Aorta (tissue), 5 donors: ENCODE measurements at regions of chr5 and their contacts with region 1.

Region 1: DNA sequence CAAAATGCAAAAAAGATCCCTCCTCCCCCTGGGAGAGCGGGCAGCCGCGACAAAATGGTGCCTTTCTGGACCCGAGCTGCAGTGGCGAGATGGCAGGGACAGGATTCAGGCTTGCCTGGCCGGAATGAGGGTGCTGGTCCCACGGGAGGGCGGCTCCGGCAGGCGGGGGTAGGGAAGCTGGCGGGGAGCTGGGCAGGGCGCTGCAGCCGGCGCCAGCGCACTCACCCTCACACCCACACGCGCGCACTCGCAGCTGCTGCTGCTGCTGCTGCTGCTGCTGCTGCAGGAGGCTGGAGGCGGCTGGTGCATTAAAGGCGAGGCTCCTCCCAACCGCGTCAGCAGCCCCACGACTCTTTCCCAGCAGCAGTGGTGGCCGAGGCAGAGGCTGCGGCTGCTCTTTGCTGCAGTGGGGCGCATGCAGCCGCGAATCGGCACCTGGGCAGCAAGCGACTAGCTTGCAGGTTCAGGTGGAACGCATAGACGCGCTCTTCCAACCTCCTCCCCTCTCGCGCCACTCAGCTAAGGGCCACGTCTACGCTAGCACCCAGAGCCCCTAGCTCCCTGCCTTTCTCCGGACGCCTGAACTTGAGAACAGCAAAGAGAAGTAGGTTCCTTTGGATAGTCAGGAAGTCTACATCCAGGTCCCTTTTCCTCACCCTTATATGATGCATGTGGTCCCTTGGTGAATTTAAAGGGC is at the start of gene PPP2R2B:
- DNase-seq: peak; percentile 78 to 89
- ATAC-seq: peak; percentile 84
- H3K4me3 ChIP-seq: peak within 1 kb of the TSS; percentile 79 to 89
- H3K27ac ChIP-seq: peak within 1 kb of the TSS in 1 of 2 donors; percentile 78
- H3K4me1 ChIP-seq: peaks cover 0 to 6% of the 10 kb centered on the region in 2 donors
- H3K27me3 ChIP-seq: no peaks in the 10 kb centered on the region
- total RNA-seq, gene PPP2R2B: 15.0 to 27.3 TPM

Region 2: GRCh38 chr5:146541958-146542849 is 336.4 kb before region 1 on chr5:
- intact Hi-C with region 1: loop called in 1 of 2 experiments (anchors 10 kb)
- DNase-seq: peak; percentile 73 to 92
- ATAC-seq: peak; percentile 86
- H3K4me3 ChIP-seq: no peak overlapping the region
- H3K27ac ChIP-seq: no peak overlapping the region
- H3K4me1 ChIP-seq: no peaks in the 10 kb centered on the region
- H3K27me3 ChIP-seq: no peaks in the 10 kb centered on the region

Region 3: DNA sequence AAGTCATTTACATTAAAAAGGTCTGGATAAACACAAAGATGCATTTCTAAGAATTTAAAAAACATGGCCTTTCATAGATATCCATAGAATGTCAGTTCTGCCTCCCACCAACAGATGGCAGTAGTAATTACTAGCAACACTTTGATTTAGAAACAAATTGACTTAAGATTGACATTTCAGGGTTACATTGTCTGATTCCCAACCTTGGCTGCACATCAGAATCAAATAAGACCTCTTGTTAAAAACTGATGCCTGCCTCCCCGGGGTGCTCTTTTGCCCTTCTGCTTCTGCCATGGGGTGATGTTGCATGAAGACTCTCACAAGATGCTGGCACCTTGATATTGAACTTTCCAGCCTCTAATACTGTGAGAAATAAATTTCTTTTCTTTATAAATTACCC is 216.4 kb before region 1 on chr5:
- intact Hi-C with region 1: loop called in 1 of 2 experiments (anchors 10 kb)
- DNase-seq: no peak
- ATAC-seq: no peak
- H3K4me3 ChIP-seq: no peak overlapping the region
- H3K27ac ChIP-seq: no peak overlapping the region
- H3K4me1 ChIP-seq: peaks cover 2 to 4% of the 10 kb centered on the region in 2 donors
- H3K27me3 ChIP-seq: no peaks in the 10 kb centered on the region

Region 4: DNA sequence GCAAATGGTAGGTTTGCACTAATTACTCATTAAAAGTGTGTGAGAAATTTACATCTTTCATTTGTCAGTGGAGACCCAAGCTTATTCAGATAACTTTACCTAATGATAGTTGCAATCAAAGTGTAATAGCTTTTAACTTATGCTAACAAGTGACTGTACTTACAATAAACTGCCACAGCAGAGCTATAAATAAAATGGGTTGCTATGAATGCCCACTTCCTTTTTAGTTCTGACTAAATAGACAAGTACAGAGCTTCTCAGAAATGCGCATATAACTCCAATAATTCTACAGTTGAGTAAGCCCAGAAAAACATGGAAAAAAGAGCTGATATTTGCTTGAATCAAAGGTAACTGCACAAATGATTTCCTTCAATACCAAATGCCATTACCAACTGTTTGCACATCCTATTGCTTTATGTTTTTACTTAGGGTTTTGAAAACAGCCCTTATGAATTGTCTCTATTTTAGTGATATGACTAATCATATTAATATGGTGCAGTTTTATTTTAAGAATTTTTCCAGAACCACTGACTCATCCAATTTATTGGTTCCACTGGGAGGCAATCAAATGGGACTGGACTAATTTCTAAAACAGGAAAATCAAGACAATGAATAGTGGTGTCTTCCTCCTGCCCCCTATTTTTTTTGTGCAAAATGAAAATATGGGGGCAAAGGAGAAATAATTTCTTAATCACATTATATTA is 84.1 kb before region 1 on chr5:
- intact Hi-C with region 1: loop called in 1 of 2 experiments (anchors 5 kb)
- DNase-seq: no peak
- ATAC-seq: peak; percentile 58
- H3K4me3 ChIP-seq: no peak overlapping the region
- H3K27ac ChIP-seq: no peak overlapping the region
- H3K4me1 ChIP-seq: peaks cover 11 to 20% of the 10 kb centered on the region in 2 donors
- H3K27me3 ChIP-seq: no peaks in the 10 kb centered on the region

Region 5: DNA sequence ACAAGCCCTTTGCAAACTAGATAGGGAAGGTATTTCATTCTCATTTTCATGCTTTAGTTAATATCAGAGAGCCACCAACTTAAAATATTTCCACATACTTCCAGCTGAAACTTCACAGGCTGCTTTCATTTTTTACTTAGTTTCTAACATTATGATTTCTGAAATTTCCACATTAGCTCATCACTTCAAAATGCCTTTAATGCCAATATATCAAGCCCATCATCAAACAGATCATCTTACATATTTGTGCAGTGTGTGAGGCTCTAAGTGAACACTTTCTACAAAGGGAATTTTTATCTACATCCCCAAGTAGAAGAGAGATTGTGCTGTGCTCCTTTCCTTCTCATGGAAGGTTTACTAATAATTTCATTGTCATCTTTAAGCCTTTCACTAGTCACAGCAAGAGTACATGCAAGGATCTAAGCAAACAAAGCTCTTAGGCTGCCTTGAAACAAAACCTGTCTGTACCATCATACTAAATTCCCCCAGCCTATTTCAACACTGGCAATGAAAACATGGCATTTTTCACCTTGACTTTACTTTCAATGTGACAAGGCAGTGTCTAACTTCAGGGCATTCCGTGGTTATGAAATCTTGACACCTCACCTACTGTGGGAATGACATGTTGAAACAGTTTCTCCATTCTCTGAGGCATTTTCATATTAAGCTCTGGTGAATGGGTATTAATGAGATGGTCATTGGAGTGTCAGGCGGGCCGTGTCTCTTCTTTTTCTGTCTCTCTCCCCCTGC is 45.5 kb before region 1 on chr5:
- intact Hi-C with region 1: loop called in 1 of 2 experiments (anchors 5 kb)
- DNase-seq: no peak
- ATAC-seq: no peak
- H3K4me3 ChIP-seq: no peak overlapping the region
- H3K27ac ChIP-seq: no peak overlapping the region
- H3K4me1 ChIP-seq: peaks cover 3 to 4% of the 10 kb centered on the region in 2 donors
- H3K27me3 ChIP-seq: no peaks in the 10 kb centered on the region

Region 6: DNA sequence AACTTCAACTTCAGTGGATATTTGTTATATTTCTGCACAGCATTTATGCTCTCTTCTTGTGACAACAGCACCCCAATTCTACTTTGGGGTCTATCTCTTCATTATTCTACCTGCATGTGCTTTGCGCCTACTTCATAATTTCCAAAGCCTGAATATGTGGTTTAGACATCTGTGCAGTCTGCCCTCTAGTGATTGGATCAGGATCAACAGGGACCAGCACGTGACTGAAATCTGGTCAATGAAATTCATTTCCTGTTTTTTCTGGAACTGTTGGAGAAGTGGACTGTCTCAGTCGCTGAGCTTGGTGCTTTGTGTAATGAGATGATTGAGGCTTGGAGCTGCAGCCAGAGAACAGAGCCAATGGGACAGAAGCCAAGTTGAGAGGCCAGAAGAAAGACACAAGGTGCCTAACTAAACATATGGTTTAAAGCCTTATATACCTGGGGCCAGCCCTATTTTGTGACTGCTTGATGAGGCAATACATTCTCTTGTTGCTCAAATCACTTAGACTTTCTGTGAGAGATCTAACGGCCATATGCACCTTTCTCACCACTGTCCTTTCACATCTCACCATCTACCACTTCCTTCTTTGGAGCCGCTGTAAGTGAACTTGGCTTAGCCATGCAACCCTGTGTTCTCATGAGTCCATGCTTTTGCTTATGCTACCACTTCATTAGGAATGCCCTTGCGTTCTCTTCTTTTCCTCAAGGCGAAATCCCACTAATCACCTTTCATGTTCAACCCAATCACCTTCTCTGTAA is 68.7 kb after region 1 on chr5:
- intact Hi-C with region 1: loop called in 1 of 2 experiments (anchors 10 kb)
- DNase-seq: no peak
- ATAC-seq: no peak
- H3K4me3 ChIP-seq: no peak overlapping the region
- H3K27ac ChIP-seq: no peak overlapping the region
- H3K4me1 ChIP-seq: peaks cover 0 to 3% of the 10 kb centered on the region in 2 donors
- H3K27me3 ChIP-seq: no peaks in the 10 kb centered on the region

Region 7: DNA sequence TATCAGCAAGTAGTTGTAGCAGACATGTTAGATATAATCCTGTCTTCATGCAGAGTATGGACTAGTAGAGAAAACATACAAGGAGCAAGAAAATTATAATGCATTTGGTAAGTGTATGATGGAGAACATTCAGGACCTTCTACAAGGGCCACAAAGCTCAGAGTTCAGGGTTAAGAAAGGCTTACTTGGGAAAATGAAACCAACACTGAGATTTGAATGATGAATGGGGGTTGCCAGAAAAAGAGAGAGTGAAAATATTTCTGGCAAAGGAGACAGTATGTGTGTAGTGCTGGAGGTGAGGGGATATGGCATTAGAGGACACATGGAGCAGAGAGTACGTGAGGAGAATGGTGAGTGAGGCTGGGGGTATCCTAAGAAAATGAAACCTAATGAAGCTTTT is 186.4 kb after region 1 on chr5:
- intact Hi-C with region 1: no loop called
- DNase-seq: no peak
- ATAC-seq: no peak
- H3K4me3 ChIP-seq: no peak overlapping the region
- H3K27ac ChIP-seq: no peak overlapping the region
- H3K4me1 ChIP-seq: no peaks in the 10 kb centered on the region
- H3K27me3 ChIP-seq: no peaks in the 10 kb centered on the region

Region 8: GRCh38 chr5:147369742-147370374 is 491.2 kb after region 1 on chr5:
- intact Hi-C with region 1: no loop called
- DNase-seq: no peak
- ATAC-seq: peak; percentile 64
- H3K4me3 ChIP-seq: peak overlapping the region in 1 of 2 donors; percentile 48
- H3K27ac ChIP-seq: no peak overlapping the region
- H3K4me1 ChIP-seq: no peaks in the 10 kb centered on the region
- H3K27me3 ChIP-seq: no peaks in the 10 kb centered on the region